HEK293 (cell line): ENCODE measurements at regions of chr9 and their contacts with region 1.

Region 1: GRCh38 chr9:92790542-92791527 is 26.2 kb upstream of the BICD2 start:
- H3K4me3 ChIP-seq: no peak overlapping the region
- H3K27ac ChIP-seq: no peak overlapping the region
- H3K4me1 ChIP-seq: no peaks in the 10 kb centered on the region
- CTCF ChIP-seq: 0 out of 2 replicates have a peak, but pooled peaks have one; percentile 54

Region 2: DNA sequence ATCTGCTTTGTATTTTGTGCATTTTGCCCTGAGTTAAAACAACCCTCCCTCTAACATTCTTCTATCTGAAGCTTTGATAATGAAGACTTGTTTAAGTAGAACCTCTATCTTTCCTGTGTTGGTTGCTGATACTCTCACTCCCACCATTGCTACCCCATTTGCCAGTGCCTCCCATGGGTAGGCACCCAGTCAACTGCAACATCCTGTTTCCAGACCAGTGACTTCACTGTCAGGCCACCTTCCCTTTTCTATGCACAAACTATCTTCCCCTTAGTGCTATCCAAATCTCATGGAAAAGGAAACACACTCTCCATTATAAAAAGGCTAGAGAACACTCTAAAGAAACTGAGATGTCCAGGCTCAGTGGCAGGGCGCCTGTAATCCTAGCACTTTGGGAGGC is 491.7 kb before region 1 on chr9:
- CTCF ChIA-PET with region 1: no interaction called
- POLR2A ChIA-PET with region 1: no interaction called
- H3K4me3 ChIP-seq: no peak overlapping the region
- H3K27ac ChIP-seq: no peak overlapping the region
- H3K4me1 ChIP-seq: no peaks in the 10 kb centered on the region; the same call in 1 of the 2 replicates
- CTCF ChIP-seq: no peak

Region 3: DNA sequence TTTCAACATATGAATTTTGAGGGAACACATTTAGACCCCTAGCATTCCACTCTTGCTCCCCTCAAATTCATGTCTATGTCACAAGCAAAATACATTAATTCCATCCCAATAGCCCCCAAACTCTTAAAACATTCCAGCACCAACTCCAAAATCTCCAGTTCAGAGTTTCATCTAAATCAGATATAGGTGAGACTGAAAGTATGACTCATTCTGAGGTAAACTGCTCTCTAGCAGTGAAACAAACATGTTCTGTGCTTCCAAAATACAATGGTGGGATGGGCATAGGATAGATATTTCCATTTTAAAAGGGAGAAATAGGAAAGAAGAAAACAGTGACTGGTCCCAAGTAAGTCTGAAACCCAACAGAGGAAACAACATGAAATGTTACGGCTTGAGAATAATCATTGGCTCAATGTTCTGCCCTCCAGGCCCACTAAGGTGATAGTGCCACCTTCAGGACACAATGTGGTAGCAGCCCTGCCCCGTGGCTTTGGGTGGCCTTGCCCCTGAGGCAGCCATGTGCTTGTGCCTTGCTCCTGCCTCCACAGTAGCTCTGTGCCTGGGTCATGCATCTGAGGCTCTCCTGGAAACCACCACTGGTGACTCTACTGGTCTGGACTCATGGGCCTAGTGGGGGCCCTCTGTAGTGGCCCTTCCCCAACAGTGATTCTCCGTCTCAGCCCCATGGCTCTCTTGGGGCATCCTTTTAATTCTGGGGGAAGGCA is 84.5 kb before region 1 on chr9:
- CTCF ChIA-PET with region 1: interaction called, 11 read pairs
- POLR2A ChIA-PET with region 1: no interaction called
- H3K4me3 ChIP-seq: no peak overlapping the region
- H3K27ac ChIP-seq: no peak overlapping the region
- H3K4me1 ChIP-seq: no peaks in the 10 kb centered on the region
- CTCF ChIP-seq: no peak

Region 4: GRCh38 chr9:92716557-92716956 is 74.3 kb before region 1 on chr9:
- CTCF ChIA-PET with region 1: interaction called, 150 read pairs
- POLR2A ChIA-PET with region 1: no interaction called
- H3K4me3 ChIP-seq: no peak overlapping the region
- H3K27ac ChIP-seq: no peak overlapping the region
- H3K4me1 ChIP-seq: no peaks in the 10 kb centered on the region
- CTCF ChIP-seq: no peak; the same call in 1 of the 2 replicates

Region 5: GRCh38 chr9:92774274-92774673 is 16.6 kb before region 1 on chr9:
- CTCF ChIA-PET with region 1: interaction called, 10 read pairs
- POLR2A ChIA-PET with region 1: no interaction called
- H3K4me3 ChIP-seq: no peak overlapping the region
- H3K27ac ChIP-seq: no peak overlapping the region
- H3K4me1 ChIP-seq: no peaks in the 10 kb centered on the region
- CTCF ChIP-seq: no peak

Region 6: GRCh38 chr9:92807031-92807756 is 16.4 kb after region 1 on chr9:
- CTCF ChIA-PET with region 1: interaction called, 14 read pairs
- POLR2A ChIA-PET with region 1: no interaction called
- H3K4me3 ChIP-seq: no peak overlapping the region
- H3K27ac ChIP-seq: no peak overlapping the region
- H3K4me1 ChIP-seq: no peaks in the 10 kb centered on the region
- CTCF ChIP-seq: no peak

Region 7: GRCh38 chr9:93468763-93469456 is 678.1 kb after region 1 on chr9:
- CTCF ChIA-PET with region 1: no interaction called
- POLR2A ChIA-PET with region 1: no interaction called
- H3K4me3 ChIP-seq: no peak overlapping the region
- H3K27ac ChIP-seq: peak overlapping the region; percentile 57; the same call in 1 of the 2 replicates
- H3K4me1 ChIP-seq: peaks cover 39% of the 10 kb centered on the region
- CTCF ChIP-seq: no peak